ENCODE measurements at regions of chr4 and their contacts with region 1.

Region 1: GRCh38 chr4:68498413-68499007 is 51.2 kb downstream of the TMPRSS11E start:
- DNase-seq: peak; percentile 78
- ATAC-seq: peak; percentile 78
- H3K4me3 ChIP-seq: no peak overlapping the region
- H3K27ac ChIP-seq: no peak overlapping the region
- H3K4me1 ChIP-seq: peaks cover 21% of the 10 kb centered on the region
- H3K27me3 ChIP-seq: no peaks in the 10 kb centered on the region
- CTCF ChIP-seq: peak; percentile 88
- EP300 ChIP-seq: peak in 1 of 2 experiments; percentile 25; a peak in 1 of 4 replicates
- POLR2A ChIP-seq: no peak
- RAD21 ChIP-seq: peak; percentile 92

Region 2: DNA sequence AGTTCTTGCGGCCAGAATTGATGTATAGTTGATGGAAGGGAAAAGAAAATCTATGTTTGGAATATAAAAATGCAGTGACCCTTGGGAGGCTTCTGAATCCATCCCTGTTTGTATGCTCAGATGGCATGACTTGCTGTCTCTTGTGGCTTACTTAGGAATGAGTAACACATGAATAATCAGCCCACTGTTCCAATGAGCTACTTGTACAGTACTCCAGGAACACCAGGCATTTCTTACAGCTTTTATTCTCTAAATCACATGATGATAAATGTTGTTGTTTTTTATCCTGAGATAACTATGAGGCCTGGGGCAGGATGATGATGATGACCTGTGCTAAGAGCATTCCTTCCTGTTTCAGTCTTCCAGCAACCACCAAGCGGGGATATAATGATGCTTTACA is 32.3 kb before region 1 on chr4:
- CTCF ChIA-PET with region 1: no interaction called
- POLR2A ChIA-PET with region 1: no interaction called
- in situ Hi-C with region 1: no loop called
- intact Hi-C with region 1: no loop called
- DNase-seq: no peak
- ATAC-seq: no peak
- H3K4me3 ChIP-seq: no peak overlapping the region
- H3K27ac ChIP-seq: no peak overlapping the region
- H3K4me1 ChIP-seq: no peaks in the 10 kb centered on the region
- H3K27me3 ChIP-seq: no peaks in the 10 kb centered on the region
- CTCF ChIP-seq: no peak
- EP300 ChIP-seq: no peak
- POLR2A ChIP-seq: no peak
- RAD21 ChIP-seq: no peak

Region 3: GRCh38 chr4:68655764-68656444 is 157.4 kb after region 1 on chr4:
- CTCF ChIA-PET with region 1: interaction called, 3 read pairs
- POLR2A ChIA-PET with region 1: no interaction called
- in situ Hi-C with region 1: no loop called
- intact Hi-C with region 1: loop called (anchors 2 kb)
- DNase-seq: peak; percentile 91
- ATAC-seq: peak; percentile 84
- H3K4me3 ChIP-seq: peak overlapping the region in 2 of 3 experiments; percentile 15 to 26; a peak in 2 of 6 replicates
- H3K27ac ChIP-seq: peak overlapping the region; percentile 95
- H3K4me1 ChIP-seq: peaks cover 53% of the 10 kb centered on the region
- H3K27me3 ChIP-seq: no peaks in the 10 kb centered on the region
- CTCF ChIP-seq: no peak
- EP300 ChIP-seq: peak in 1 of 2 experiments; percentile 72; a peak in 2 of 4 replicates
- POLR2A ChIP-seq: no peak
- RAD21 ChIP-seq: no peak

Region 4: GRCh38 chr4:68700152-68700551 is 201.6 kb after region 1 on chr4:
- CTCF ChIA-PET with region 1: no interaction called
- POLR2A ChIA-PET with region 1: no interaction called
- in situ Hi-C with region 1: no loop called
- intact Hi-C with region 1: no loop called
- DNase-seq: no peak
- ATAC-seq: no peak
- H3K4me3 ChIP-seq: no peak overlapping the region
- H3K27ac ChIP-seq: no peak overlapping the region
- H3K4me1 ChIP-seq: peaks cover 14% of the 10 kb centered on the region
- H3K27me3 ChIP-seq: no peaks in the 10 kb centered on the region
- CTCF ChIP-seq: no peak
- EP300 ChIP-seq: no peak
- POLR2A ChIP-seq: no peak
- RAD21 ChIP-seq: no peak

Region 5: DNA sequence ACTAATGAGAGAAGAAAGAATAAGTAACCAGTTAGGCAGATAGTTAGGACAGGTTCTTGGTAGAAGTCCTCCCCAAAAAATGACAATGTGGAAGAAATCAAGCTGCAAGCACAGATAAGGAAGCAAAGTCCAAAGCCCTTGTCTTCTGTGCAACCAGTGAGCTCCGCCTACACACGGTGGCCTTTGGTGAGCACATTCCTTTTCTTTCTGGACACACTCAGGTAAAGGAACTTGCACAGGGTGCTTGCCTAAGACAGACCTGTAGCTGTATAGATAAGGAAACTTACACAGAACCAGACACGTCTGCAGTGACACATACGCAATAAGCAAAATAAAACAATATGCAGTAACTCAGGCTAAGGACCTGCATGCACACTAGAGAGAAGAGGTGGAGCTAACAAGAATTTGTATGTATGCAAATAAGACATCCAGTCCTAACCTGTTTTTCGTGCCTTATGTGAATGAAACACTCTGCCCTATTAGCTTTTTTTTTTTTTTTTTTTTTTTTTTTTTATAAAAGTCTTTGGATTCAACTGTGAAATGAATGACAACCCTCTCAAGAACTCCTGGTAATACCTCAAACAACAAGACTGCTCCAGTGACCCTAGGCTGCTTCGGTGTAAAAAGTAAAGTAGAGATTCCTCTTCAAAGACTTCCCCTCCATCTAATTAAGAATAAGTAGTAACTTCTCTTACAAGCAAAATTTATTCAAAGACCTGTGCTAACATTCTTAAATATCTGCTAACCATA is 366.1 kb after region 1 on chr4:
- CTCF ChIA-PET with region 1: no interaction called
- POLR2A ChIA-PET with region 1: interaction called, 4 read pairs
- in situ Hi-C with region 1: no loop called
- intact Hi-C with region 1: loop called (anchors 2 kb)
- DNase-seq: peak; percentile 92
- ATAC-seq: peak; percentile 96
- H3K4me3 ChIP-seq: peak overlapping the region in 2 of 3 experiments; percentile 35 to 51; a peak in 3 of 6 replicates
- H3K27ac ChIP-seq: peak overlapping the region; percentile 76
- H3K4me1 ChIP-seq: peaks cover 61% of the 10 kb centered on the region
- H3K27me3 ChIP-seq: no peaks in the 10 kb centered on the region
- CTCF ChIP-seq: 0 out of 2 replicates have a peak, but pooled peaks have one; percentile 10
- EP300 ChIP-seq: peak in 1 of 2 experiments; percentile 86; a peak in 2 of 4 replicates
- POLR2A ChIP-seq: no peak; a peak in 1 of 4 replicates
- RAD21 ChIP-seq: no peak

Region 6: DNA sequence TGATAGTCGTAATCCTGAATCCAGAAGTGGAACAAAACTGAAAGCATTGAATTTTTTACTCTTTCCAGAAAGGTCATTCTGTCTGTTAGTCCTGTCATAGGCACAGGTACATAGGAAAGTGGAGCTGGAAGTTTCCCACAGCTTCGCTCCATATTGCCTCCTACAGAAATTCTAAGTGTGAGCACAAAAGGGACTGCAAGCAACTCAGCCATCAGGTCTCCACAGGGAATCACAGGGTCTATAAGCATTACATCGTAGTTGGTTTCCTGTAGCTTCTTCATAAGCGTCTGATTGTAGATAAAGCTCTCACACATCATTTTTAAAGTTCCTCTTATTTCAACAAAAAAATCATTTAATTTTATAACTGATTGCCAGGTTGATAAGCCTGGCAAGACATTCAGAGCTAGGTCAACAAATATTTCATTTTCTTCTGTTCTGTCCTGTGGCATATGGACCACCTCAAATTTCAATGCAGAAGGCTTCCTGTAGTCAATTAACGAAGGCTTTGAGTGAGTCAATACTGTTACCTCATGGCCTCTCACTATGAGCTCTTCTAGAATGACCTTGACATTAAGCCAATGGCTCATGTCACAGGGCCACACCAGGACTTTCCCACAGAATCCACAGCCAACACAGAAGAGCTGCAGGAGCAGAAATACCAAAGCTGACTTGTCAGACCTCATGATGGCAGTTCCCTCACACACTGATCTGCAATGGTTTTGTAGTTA is 452.7 kb after region 1 on chr4 and contains the start of gene UGT2A3:
- CTCF ChIA-PET with region 1: no interaction called
- POLR2A ChIA-PET with region 1: no interaction called
- in situ Hi-C with region 1: no loop called
- intact Hi-C with region 1: loop called (anchors 2 kb)
- DNase-seq: peak; percentile 99
- ATAC-seq: peak; percentile 91
- H3K4me3 ChIP-seq: peak within 1 kb of the TSS; percentile 59 to 93 (median 70); a peak in 5 of 6 replicates
- H3K27ac ChIP-seq: peak within 1 kb of the TSS; percentile 92
- H3K4me1 ChIP-seq: peaks cover 77% of the 10 kb centered on the region
- H3K27me3 ChIP-seq: no peaks in the 10 kb centered on the region
- CTCF ChIP-seq: peak; percentile 30
- EP300 ChIP-seq: peak; percentile 44 to 85; a peak in 2 of 4 replicates
- POLR2A ChIP-seq: peak; percentile 69 to 88
- RAD21 ChIP-seq: no peak
- total RNA-seq, gene UGT2A3: 74.1 and 97.2 TPM in 2 replicates

Region 7: DNA sequence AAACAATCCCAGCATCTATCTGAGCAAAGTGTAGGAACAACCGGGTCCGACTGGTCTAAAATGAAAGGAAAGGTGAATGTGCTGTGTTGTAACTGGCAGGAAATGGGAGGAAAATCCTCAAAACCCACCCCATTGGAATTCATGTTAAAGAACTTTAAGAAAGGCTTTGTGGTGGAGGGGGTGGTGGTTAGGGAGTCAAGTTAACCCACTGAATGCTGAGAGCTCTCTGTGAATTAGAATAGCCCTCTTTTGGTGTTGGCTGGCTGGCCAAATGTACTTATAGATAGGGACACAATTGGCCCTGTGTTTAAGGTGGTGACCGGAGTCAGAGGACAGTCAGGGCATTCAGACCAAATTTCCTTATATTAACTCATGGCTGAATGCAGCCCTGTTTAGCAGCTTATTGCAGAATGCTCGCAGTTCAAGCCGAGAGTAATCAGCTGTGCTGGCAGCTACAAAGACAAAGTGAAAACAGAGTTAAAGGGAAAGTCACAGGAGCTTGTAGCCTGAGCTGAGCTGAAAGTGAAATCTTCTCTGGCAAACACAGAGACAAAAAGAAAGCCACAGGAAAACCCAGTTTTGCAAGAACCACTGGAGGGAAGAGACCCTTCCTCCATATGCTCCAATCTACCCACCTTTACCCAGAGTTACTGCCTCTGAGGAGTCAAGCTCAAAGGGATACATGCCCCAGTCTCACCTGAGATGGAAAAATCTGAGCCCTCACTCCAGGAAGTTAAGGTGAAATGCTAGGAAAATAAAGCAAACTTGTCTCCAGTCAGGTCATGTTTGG is 559.3 kb after region 1 on chr4:
- CTCF ChIA-PET with region 1: no interaction called
- POLR2A ChIA-PET with region 1: no interaction called
- in situ Hi-C with region 1: loop called (anchors 25 kb)
- intact Hi-C with region 1: loop called (anchors 10 kb)
- DNase-seq: peak; percentile 93
- ATAC-seq: peak; percentile 87
- H3K4me3 ChIP-seq: peak overlapping the region; percentile 11 to 43 (median 31); a peak in 5 of 6 replicates
- H3K27ac ChIP-seq: peak overlapping the region; percentile 88
- H3K4me1 ChIP-seq: peaks cover 78% of the 10 kb centered on the region
- H3K27me3 ChIP-seq: no peaks in the 10 kb centered on the region
- CTCF ChIP-seq: no peak
- EP300 ChIP-seq: peak in 1 of 2 experiments; percentile 71; a peak in 1 of 4 replicates
- POLR2A ChIP-seq: peak; percentile 14 to 38
- RAD21 ChIP-seq: no peak

Region 8: GRCh38 chr4:69617083-69617694 is 1118.7 kb after region 1 on chr4:
- CTCF ChIA-PET with region 1: no interaction called
- POLR2A ChIA-PET with region 1: no interaction called
- in situ Hi-C with region 1: loop called (anchors 25 kb)
- intact Hi-C with region 1: no loop called
- DNase-seq: peak; percentile 40
- ATAC-seq: no peak
- H3K4me3 ChIP-seq: no peak overlapping the region
- H3K27ac ChIP-seq: no peak overlapping the region
- H3K4me1 ChIP-seq: no peaks in the 10 kb centered on the region
- H3K27me3 ChIP-seq: no peaks in the 10 kb centered on the region
- CTCF ChIP-seq: peak; percentile 71
- EP300 ChIP-seq: no peak
- POLR2A ChIP-seq: no peak
- RAD21 ChIP-seq: peak; percentile 78